AG04449 (cell line): ENCODE measurements at regions of chr2 and their contacts with region 1.

Region 1: GRCh38 chr2:231514103-231514950 is 15.9 kb downstream of the NMUR1 start:
- DNase-seq: peak; percentile 53
- H3K4me3 ChIP-seq: peak overlapping the region; percentile 89
- CTCF ChIP-seq: no peak

Region 2: DNA sequence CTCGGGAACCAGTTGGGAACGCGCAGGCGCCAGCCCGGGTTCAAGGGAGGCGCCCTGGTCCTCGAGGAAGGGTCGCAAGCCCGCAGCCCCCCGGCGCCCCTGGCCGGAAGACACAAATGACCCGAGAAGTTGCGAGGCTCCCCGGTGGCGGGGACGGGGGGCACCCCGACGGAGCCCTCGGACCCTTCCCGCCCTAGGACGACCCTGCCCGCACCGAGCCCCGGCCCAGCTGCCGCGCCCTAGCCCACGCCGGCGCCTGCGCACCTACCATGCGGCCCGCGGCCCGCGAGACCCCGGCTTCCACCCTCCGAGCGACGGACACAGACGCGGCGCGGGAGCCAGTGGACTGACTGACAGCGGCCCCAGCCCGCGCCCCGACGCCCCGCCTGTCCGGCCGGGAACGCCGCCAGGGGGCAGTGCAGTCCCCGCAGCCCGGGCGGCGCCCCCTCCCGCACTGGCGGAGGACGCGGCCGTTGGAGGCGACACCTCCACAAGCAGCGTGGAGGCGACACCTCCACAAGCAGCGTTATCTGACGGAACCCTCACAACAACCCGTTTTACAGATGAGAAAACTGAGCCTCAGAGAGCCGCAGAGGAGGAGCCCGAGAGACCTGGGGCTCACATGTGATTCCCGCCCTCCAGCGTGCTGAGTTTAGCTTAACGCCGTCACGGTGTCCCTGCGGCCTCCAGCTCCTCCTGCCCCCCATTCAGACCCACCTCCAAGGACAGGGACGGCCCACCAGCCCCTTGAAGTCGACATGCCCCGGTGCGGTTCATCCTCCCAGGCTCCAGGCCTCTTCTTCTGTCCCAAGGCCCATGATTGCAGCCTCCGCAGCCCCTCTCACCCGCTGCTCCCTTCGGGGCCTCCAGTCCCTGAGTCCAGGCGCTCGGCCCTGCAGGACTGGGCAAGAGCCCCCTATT is 16.0 kb after region 1 on chr2 and contains the start of gene NMUR1:
- CTCF ChIA-PET with region 1: interaction called, 13 read pairs
- POLR2A ChIA-PET with region 1: no interaction called
- DNase-seq: no peak
- H3K4me3 ChIP-seq: peak within 1 kb of the TSS; percentile 6; the same call in 1 of the 2 replicates
- CTCF ChIP-seq: peak; percentile 61